BJ (cell line): ENCODE measurements at regions of chr2 and their contacts with region 1.

Region 1: GRCh38 chr2:161983866-161984265 is 90.1 kb downstream of the DPP4 start:
- DNase-seq: no peak
- H3K4me3 ChIP-seq: no peak overlapping the region
- H3K27me3 ChIP-seq: no peaks in the 10 kb centered on the region
- CTCF ChIP-seq: no peak

Region 2: GRCh38 chr2:161873707-161874106 is 110.2 kb before region 1 on chr2:
- CTCF ChIA-PET with region 1: no interaction called
- POLR2A ChIA-PET with region 1: no interaction called
- DNase-seq: no peak
- H3K4me3 ChIP-seq: no peak overlapping the region
- H3K27me3 ChIP-seq: no peaks in the 10 kb centered on the region
- CTCF ChIP-seq: no peak

Region 3: GRCh38 chr2:161965994-161966393 is 17.9 kb before region 1 on chr2:
- CTCF ChIA-PET with region 1: no interaction called
- POLR2A ChIA-PET with region 1: no interaction called
- DNase-seq: no peak
- H3K4me3 ChIP-seq: no peak overlapping the region
- H3K27me3 ChIP-seq: no peaks in the 10 kb centered on the region
- CTCF ChIP-seq: no peak

Region 4: GRCh38 chr2:162196638-162197037 is 212.8 kb after region 1 on chr2:
- CTCF ChIA-PET with region 1: no interaction called
- POLR2A ChIA-PET with region 1: interaction called, 10 read pairs
- DNase-seq: no peak
- H3K4me3 ChIP-seq: no peak overlapping the region
- H3K27me3 ChIP-seq: no peaks in the 10 kb centered on the region
- CTCF ChIP-seq: no peak